ENCODE measurements at regions of chr6 and their contacts with region 1.

Region 1: GRCh38 chr6:35297601-35298481 is at the start of gene DEF6:
- DNase-seq: peak; percentile 96
- H3K4me3 Mint-ChIP-seq: peak within 1 kb of the TSS; percentile 82
- H3K27ac Mint-ChIP-seq: peak within 1 kb of the TSS; percentile 83
- H3K4me1 Mint-ChIP-seq: peaks cover 40% of the 10 kb centered on the region
- H3K27me3 Mint-ChIP-seq: no peaks in the 10 kb centered on the region
- total RNA-seq, gene DEF6: 103 and 113 TPM in 2 replicates

Region 2: DNA sequence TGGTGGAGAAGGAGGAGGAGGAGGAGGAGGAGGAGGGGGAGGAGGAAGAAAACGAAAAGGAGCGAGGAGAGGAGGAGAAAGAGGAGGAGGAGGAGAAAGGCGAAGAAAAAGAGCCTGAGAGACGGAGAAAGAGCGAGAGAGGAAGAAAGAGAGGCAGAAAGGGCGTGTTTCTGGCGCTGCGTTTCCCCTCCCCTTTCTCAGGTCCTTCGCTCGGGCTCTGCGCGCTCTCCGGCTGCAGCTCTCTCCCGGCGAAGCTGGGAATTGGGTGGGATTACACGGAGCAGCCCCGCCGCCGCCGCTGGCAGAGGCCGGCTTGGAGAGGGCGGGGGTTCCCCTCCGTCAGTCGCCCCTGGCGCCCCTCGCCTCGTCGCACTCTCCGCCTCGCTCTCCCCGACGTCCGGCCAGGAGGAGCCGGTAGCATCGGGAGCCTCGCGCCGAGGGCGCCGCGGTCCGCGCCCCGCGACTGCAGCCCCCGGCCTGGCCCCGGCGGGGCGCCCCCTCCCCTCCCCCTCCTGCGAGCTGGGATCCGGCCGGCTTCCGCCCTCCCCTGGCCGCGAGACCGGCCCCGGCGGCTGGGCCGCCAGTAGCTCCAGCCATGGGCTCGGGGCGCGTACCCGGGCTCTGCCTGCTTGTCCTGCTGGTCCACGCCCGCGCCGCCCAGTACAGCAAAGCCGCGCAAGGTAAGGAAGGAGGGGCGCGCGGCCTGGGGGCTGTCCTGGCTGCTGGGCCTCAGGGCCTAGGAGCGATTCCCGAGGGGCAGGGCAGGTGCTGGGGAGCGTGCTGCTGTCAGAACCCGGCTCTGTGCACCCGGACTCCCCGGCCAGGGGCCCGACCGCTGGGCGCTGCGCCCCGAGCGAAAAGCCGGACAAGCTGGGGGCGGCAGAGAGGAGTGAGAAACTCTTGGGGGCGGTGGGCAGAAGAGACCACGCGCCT is 83.8 kb before region 1 on chr6 and contains the start of gene SCUBE3:
- intact Hi-C with region 1: no loop called
- DNase-seq: peak; percentile 70
- H3K4me3 Mint-ChIP-seq: peak within 1 kb of the TSS; percentile 75
- H3K27ac Mint-ChIP-seq: no peak within 1 kb of the TSS
- H3K4me1 Mint-ChIP-seq: peaks cover 2% of the 10 kb centered on the region
- H3K27me3 Mint-ChIP-seq: peaks cover 68% of the 10 kb centered on the region
- total RNA-seq, gene SCUBE3: 0.02 and 0.07 TPM in 2 replicates

Region 3: GRCh38 chr6:35259194-35259947 is 38.5 kb before region 1 on chr6 and contains the start of gene ZNF76:
- intact Hi-C with region 1: loop called (anchors 2 kb)
- DNase-seq: peak; percentile 97
- H3K4me3 Mint-ChIP-seq: peak within 1 kb of the TSS; percentile 96
- H3K27ac Mint-ChIP-seq: peak within 1 kb of the TSS; percentile 95
- H3K4me1 Mint-ChIP-seq: peaks cover 27% of the 10 kb centered on the region
- H3K27me3 Mint-ChIP-seq: no peaks in the 10 kb centered on the region
- total RNA-seq, gene ZNF76: 31.0 and 31.4 TPM in 2 replicates

Region 4: DNA sequence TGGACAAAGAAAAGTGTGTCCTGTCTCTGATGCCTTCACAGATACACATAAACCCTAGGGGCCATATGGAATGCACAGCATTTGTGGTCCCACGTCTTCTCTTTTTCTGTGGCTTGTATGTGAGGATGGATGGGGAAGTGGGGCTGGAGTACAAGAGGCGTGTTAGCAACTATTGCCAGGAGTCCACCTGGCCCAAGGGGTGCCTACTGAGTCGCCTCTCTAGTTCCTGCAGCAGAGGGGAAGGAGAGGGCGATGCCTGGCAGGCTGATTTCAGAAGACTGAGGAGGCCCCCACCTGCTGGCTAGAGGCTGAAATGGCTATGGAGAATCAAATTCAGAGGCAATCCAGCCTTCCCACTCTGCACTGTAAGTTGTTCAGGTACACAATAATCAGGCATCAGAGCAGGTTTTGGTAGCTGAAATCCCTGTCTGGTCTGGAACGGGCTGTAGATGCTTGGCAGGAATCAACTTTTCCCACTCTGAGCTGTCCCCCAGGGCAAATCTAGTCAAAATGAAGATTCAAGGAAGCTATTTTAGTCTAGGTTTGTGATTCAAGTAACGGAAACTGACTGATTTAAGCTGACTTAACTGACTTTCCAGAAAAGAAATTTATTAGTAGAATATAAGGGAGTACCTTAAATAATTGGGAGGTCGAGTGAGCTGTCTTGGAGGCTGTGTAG is 29.6 kb after region 1 on chr6:
- intact Hi-C with region 1: loop called (anchors 1 kb)
- DNase-seq: peak; percentile 92
- H3K4me3 Mint-ChIP-seq: no peak overlapping the region
- H3K27ac Mint-ChIP-seq: peak overlapping the region; percentile 23
- H3K4me1 Mint-ChIP-seq: peaks cover 17% of the 10 kb centered on the region
- H3K27me3 Mint-ChIP-seq: no peaks in the 10 kb centered on the region

Region 5: GRCh38 chr6:35370124-35370741 is 72.4 kb after region 1 on chr6:
- intact Hi-C with region 1: loop called (anchors 2 kb)
- DNase-seq: peak; percentile 78
- H3K4me3 Mint-ChIP-seq: peak overlapping the region; percentile 79
- H3K27ac Mint-ChIP-seq: peak overlapping the region; percentile 96
- H3K4me1 Mint-ChIP-seq: peaks cover 55% of the 10 kb centered on the region
- H3K27me3 Mint-ChIP-seq: no peaks in the 10 kb centered on the region

Region 6: GRCh38 chr6:35468181-35468979 is 170.5 kb after region 1 on chr6 and contains the start of gene RPL10A:
- intact Hi-C with region 1: loop called (anchors 1 kb)
- DNase-seq: peak; percentile 98
- H3K4me3 Mint-ChIP-seq: peak within 1 kb of the TSS; percentile 97
- H3K27ac Mint-ChIP-seq: peak within 1 kb of the TSS; percentile 98
- H3K4me1 Mint-ChIP-seq: peaks cover 39% of the 10 kb centered on the region
- H3K27me3 Mint-ChIP-seq: no peaks in the 10 kb centered on the region
- total RNA-seq, gene RPL10A: 1,702 and 1,710 TPM in 2 replicates

Measured in activated CD4-positive, alpha-beta T cell treated with anti-CD3 and anti-CD28 coated beads, Interleukin-2, amount 10 ng/mL, durations not matched to agents 24 days and 14 days (primary cell).